ENCODE measurements at regions of chr4 and their contacts with region 1.

Region 1: GRCh38 chr4:48578132-48578968 is 88.3 kb downstream of the ZAR1 start:
- DNase-seq: peak; percentile 78
- ATAC-seq: peak; percentile 99
- H3K4me3 ChIP-seq: no peak overlapping the region
- H3K27ac ChIP-seq: no peak overlapping the region
- H3K4me1 ChIP-seq: no peaks in the 10 kb centered on the region
- H3K27me3 ChIP-seq: no peaks in the 10 kb centered on the region
- CTCF ChIP-seq: peak; percentile 87
- POLR2A ChIP-seq: no peak
- RAD21 ChIP-seq: peak; percentile 86

Region 2: GRCh38 chr4:48681856-48682255 is 103.5 kb after region 1 on chr4:
- CTCF ChIA-PET with region 1: interaction called, 3 read pairs
- POLR2A ChIA-PET with region 1: no interaction called
- dilution Hi-C with region 1: no loop called
- in situ Hi-C with region 1: no loop called
- intact Hi-C with region 1: loop called (anchors 1 kb)
- DNase-seq: peak; percentile 52
- ATAC-seq: peak; percentile 66; the same call in 1 of the 2 replicates
- H3K4me3 ChIP-seq: no peak overlapping the region
- H3K27ac ChIP-seq: no peak overlapping the region
- H3K4me1 ChIP-seq: no peaks in the 10 kb centered on the region; the same call in 1 of the 2 replicates
- H3K27me3 ChIP-seq: no peaks in the 10 kb centered on the region
- CTCF ChIP-seq: peak; percentile 56
- POLR2A ChIP-seq: no peak
- RAD21 ChIP-seq: peak; percentile 65

Region 3: DNA sequence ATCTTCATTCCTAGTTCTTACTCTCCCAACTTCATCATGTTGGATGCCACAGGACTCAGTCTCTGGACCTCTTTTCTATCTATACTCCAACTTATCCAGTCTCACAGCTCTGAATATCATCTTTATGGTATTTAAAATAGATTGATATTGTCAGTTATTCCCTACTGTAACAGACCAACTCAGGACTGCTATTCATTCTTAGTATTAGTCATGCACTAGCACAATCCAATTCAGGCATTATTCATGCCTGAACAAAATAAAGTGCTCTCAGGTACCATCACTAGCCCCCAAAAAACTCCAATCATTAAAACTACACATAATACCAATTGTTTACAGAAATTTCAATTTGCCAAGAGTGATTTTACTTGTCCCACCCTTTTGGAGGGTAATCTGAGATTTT is 164.1 kb after region 1 on chr4:
- CTCF ChIA-PET with region 1: no interaction called
- POLR2A ChIA-PET with region 1: no interaction called
- dilution Hi-C with region 1: no loop called
- in situ Hi-C with region 1: no loop called
- intact Hi-C with region 1: no loop called
- DNase-seq: peak; percentile 27
- ATAC-seq: peak; percentile 72
- H3K4me3 ChIP-seq: no peak overlapping the region
- H3K27ac ChIP-seq: no peak overlapping the region
- H3K4me1 ChIP-seq: peaks cover 1% of the 10 kb centered on the region; the same call in 1 of the 2 replicates
- H3K27me3 ChIP-seq: no peaks in the 10 kb centered on the region
- CTCF ChIP-seq: no peak
- POLR2A ChIP-seq: no peak
- RAD21 ChIP-seq: no peak